Activated CD4-positive, alpha-beta memory T cell treated with anti-CD3 and anti-CD28 coated beads for 36 hours (primary cell): ENCODE measurements at regions of chr11 and their contacts with region 1.

Region 1: GRCh38 chr11:6682936-6683861 is at the start of gene MRPL17:
- DNase-seq: peak; percentile 100
- H3K4me3 Mint-ChIP-seq: peak within 1 kb of the TSS; percentile 99
- H3K27ac Mint-ChIP-seq: peak within 1 kb of the TSS; percentile 95
- H3K4me1 Mint-ChIP-seq: peaks cover 36% of the 10 kb centered on the region
- H3K27me3 Mint-ChIP-seq: no peaks in the 10 kb centered on the region
- total RNA-seq, gene MRPL17: 98.5 to 102 TPM

Region 2: GRCh38 chr11:6419009-6419631 is 264.1 kb before region 1 on chr11 and contains the start of gene APBB1:
- CTCF ChIA-PET with region 1: interaction called, 3 read pairs
- POLR2A ChIA-PET with region 1: no interaction called
- intact Hi-C with region 1: loop called (anchors 10 kb)
- DNase-seq: peak; percentile 78
- H3K4me3 Mint-ChIP-seq: peak within 1 kb of the TSS; percentile 73
- H3K27ac Mint-ChIP-seq: peak within 1 kb of the TSS; percentile 61
- H3K4me1 Mint-ChIP-seq: peaks cover 8% of the 10 kb centered on the region
- H3K27me3 Mint-ChIP-seq: peaks cover 5% of the 10 kb centered on the region
- total RNA-seq, gene APBB1: 51.6 to 55.3 TPM

Region 3: GRCh38 chr11:6531267-6531752 is 151.9 kb before region 1 on chr11:
- CTCF ChIA-PET with region 1: interaction called, 22 read pairs
- POLR2A ChIA-PET with region 1: no interaction called
- intact Hi-C with region 1: loop called (anchors 1 kb)
- DNase-seq: no peak
- H3K4me3 Mint-ChIP-seq: no peak overlapping the region
- H3K27ac Mint-ChIP-seq: no peak overlapping the region
- H3K4me1 Mint-ChIP-seq: peaks cover 11% of the 10 kb centered on the region
- H3K27me3 Mint-ChIP-seq: no peaks in the 10 kb centered on the region

Region 4: GRCh38 chr11:6619004-6619745 is 64.0 kb before region 1 on chr11 and contains the start of gene TPP1:
- CTCF ChIA-PET with region 1: interaction called, 35 read pairs
- POLR2A ChIA-PET with region 1: interaction called, 20 read pairs
- intact Hi-C with region 1: loop called (anchors 1 kb)
- DNase-seq: peak; percentile 93
- H3K4me3 Mint-ChIP-seq: no peak within 1 kb of the TSS
- H3K27ac Mint-ChIP-seq: no peak within 1 kb of the TSS
- H3K4me1 Mint-ChIP-seq: peaks cover 10% of the 10 kb centered on the region
- H3K27me3 Mint-ChIP-seq: no peaks in the 10 kb centered on the region
- total RNA-seq, gene TPP1: 53.2 to 56.6 TPM

Region 5: DNA sequence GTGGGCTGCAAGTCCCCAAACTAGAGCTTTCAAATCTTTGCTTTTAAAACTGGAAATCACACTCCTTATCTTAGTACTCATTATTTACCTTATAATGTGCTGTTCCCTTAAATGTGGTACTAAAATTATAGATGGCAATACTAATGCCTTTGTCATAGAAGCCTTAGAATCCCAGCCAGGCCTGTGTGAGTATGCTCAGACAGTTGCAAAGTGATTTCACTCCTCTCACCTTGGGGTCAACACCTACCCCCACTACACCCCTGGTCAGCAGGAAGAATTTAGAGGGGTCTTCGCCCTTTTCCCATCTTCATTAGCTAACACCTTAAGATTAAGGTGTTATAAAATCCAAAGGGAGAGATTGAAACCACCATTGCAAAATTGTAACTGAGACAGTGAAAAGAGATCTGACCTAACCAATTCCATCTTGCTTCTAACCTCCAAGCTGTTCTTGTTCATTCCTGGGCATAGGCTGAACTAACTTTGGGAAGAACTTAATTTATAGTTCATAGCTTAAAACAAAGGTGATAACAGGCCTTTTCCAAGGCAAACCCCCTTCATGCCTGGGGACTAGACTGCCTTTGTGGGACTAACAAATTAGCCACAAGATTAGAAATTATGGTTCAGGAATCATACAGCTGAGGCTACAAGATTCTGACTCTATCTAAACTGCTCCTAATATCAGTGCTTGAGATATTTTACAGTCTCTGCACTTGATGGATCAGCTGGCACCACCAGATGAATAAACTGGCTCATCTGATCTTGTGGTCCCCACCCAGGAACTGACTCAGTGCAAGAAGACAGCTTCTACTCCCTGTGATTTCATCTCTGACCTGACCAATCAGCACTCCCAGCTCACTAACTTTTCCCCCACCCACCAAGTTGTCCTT is 10.4 kb after region 1 on chr11:
- CTCF ChIA-PET with region 1: interaction called, 3 read pairs
- POLR2A ChIA-PET with region 1: interaction called, 3 read pairs
- intact Hi-C with region 1: loop called (anchors 1 kb)
- DNase-seq: peak; percentile 83
- H3K4me3 Mint-ChIP-seq: peak overlapping the region; percentile 4
- H3K27ac Mint-ChIP-seq: peak overlapping the region; percentile 72
- H3K4me1 Mint-ChIP-seq: peaks cover 42% of the 10 kb centered on the region
- H3K27me3 Mint-ChIP-seq: no peaks in the 10 kb centered on the region

Region 6: DNA sequence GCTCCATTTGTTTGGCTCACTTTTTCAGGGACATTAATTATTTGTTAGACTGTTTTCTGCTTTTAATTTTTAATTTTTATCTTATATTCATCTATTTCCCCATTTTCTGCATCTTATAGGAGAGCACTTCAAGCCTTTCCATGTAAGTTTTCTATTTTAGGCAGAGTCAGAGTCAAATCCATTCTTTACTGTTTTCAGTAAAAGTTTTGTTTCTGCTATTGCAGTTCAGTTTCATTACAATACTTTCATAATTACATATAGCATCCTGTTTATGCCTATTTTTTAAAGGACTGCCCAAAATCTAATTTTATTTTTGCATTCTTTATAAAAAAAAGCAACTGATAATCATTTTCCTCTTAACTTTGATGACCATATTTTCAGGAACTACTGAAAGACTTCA is 158.5 kb after region 1 on chr11:
- CTCF ChIA-PET with region 1: no interaction called
- POLR2A ChIA-PET with region 1: no interaction called
- intact Hi-C with region 1: no loop called
- DNase-seq: no peak
- H3K4me3 Mint-ChIP-seq: no peak overlapping the region
- H3K27ac Mint-ChIP-seq: no peak overlapping the region
- H3K4me1 Mint-ChIP-seq: no peaks in the 10 kb centered on the region
- H3K27me3 Mint-ChIP-seq: peaks cover 13% of the 10 kb centered on the region

Region 7: GRCh38 chr11:8033305-8034105 is 1350.3 kb after region 1 on chr11:
- CTCF ChIA-PET with region 1: no interaction called
- POLR2A ChIA-PET with region 1: no interaction called
- intact Hi-C with region 1: no loop called
- DNase-seq: peak; percentile 63
- H3K4me3 Mint-ChIP-seq: no peak overlapping the region
- H3K27ac Mint-ChIP-seq: no peak overlapping the region
- H3K4me1 Mint-ChIP-seq: peaks cover 7% of the 10 kb centered on the region
- H3K27me3 Mint-ChIP-seq: peaks cover 12% of the 10 kb centered on the region